Thyroid gland (tissue), 4 donors: ENCODE measurements at regions of chr3 and their contacts with region 1.

Region 1: DNA sequence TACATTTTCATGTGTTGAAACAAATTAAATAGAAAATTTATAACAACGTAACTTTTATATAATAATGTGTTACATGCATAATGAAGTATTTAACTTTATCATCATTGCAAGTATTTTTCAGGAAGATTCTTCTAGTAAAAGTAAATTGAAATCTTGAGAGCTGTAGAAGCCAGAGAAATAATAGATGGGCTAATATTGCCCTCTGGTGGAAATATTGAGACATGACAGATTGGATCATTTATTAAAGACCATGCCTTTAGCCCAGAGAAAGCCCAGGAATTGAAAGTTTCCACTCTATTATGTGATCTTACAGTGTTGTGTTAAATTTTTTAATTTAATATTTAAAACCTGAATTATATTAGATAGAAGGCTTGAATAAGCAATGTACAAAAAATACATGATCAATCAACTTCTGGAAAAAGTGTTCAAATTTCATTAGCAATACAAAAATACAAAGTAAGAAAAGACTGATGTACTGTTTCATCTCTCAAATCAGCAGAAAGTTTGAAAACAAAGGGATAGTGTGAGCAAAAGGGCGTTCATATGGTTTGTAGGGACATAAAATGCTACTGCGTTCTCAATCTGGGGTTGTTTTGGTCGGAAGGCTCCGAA is 52.7 kb upstream of the SPTSSB start:
- DNase-seq: no peak
- H3K4me3 ChIP-seq: no peak overlapping the region
- H3K27ac ChIP-seq: no peak overlapping the region
- H3K4me1 ChIP-seq: peaks cover 6 to 7% of the 10 kb centered on the region in 2 donors
- H3K27me3 ChIP-seq: no peaks in the 10 kb centered on the region
- CTCF ChIP-seq: peak; percentile 54 to 89 (median 69)
- POLR2A ChIP-seq: no peak

Region 2: DNA sequence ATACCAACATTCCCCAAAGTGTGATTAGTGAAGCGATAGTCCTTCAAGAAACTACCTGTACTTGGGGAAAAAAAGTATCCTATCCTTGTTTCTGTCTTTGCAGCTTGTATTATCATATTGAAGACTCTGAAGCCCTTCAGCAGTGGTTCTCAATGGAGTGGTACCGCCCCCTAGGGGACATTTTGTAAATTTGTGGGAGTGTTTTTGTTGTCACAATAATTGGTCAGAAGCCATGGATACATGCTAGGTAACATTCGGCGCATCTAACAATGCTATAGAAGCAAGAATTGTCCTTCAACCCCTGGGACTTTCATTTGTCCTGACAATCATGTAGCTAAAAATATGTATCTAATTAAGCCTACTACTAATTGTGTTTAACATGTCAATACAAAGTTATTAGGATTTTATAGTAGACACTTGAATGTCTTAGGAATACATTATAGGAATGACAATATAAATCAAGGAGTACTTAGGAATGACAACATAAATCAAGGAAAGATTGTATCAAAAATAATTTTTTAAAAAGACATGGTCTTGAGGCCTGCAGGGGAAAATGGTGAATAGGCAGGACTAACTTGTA is 149.2 kb before region 1 on chr3:
- intact Hi-C with region 1: loop called (anchors 2 kb)
- DNase-seq: peak; percentile 9
- H3K4me3 ChIP-seq: no peak overlapping the region
- H3K27ac ChIP-seq: no peak overlapping the region
- H3K4me1 ChIP-seq: no peaks in the 10 kb centered on the region
- H3K27me3 ChIP-seq: no peaks in the 10 kb centered on the region
- CTCF ChIP-seq: peak in 4 of 6 experiments; percentile 21 to 48 (median 34)
- POLR2A ChIP-seq: no peak

Region 3: DNA sequence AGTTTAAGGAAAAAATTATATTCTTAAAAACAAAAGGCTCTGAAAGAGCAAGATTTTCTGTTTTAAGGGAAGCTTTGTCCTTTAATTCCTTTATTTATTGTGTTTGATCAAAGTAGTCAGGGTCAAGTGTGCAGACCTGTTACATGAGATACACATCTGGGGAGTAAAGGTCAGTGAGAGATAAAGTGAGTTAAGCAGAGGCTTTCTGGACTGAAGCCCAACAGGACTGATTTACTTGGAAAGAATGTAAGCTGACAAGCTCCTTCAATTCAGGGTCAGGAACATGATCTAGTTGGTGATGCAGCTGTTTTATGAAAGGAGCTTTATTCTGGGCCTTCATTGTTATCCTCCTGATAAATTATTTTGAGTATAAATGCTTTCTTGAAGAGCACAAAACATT is 51.9 kb after region 1 on chr3:
- intact Hi-C with region 1: no loop called
- DNase-seq: no peak
- H3K4me3 ChIP-seq: no peak overlapping the region
- H3K27ac ChIP-seq: no peak overlapping the region
- H3K4me1 ChIP-seq: no peaks in the 10 kb centered on the region
- H3K27me3 ChIP-seq: no peaks in the 10 kb centered on the region
- CTCF ChIP-seq: no peak
- POLR2A ChIP-seq: no peak